ENCODE measurements at regions of chr19 and their contacts with region 1.

Region 1: GRCh38 chr19:5128251-5128935 is 159.5 kb downstream of the KDM4B start:
- DNase-seq: no peak
- ATAC-seq: no peak
- H3K4me3 Mint-ChIP-seq: peak overlapping the region; percentile 77
- H3K27ac Mint-ChIP-seq: peak overlapping the region; percentile 91
- H3K4me1 Mint-ChIP-seq: peaks cover 87% of the 10 kb centered on the region
- H3K27me3 Mint-ChIP-seq: no peaks in the 10 kb centered on the region
- CTCF ChIP-seq: no peak

Region 2: GRCh38 chr19:4831304-4831978 is 297.0 kb before region 1 on chr19 and contains the start of gene TICAM1:
- CTCF ChIA-PET with region 1: no interaction called
- POLR2A ChIA-PET with region 1: interaction called, 8 read pairs
- intact Hi-C with region 1: loop called (anchors 1 kb)
- DNase-seq: peak; percentile 78
- ATAC-seq: peak; percentile 76
- H3K4me3 Mint-ChIP-seq: peak within 1 kb of the TSS; percentile 90
- H3K27ac Mint-ChIP-seq: peak within 1 kb of the TSS; percentile 94
- H3K4me1 Mint-ChIP-seq: peaks cover 40% of the 10 kb centered on the region
- H3K27me3 Mint-ChIP-seq: no peaks in the 10 kb centered on the region
- CTCF ChIP-seq: no peak
- total RNA-seq, gene TICAM1: 34.4 and 39.4 TPM in 2 replicates

Region 3: DNA sequence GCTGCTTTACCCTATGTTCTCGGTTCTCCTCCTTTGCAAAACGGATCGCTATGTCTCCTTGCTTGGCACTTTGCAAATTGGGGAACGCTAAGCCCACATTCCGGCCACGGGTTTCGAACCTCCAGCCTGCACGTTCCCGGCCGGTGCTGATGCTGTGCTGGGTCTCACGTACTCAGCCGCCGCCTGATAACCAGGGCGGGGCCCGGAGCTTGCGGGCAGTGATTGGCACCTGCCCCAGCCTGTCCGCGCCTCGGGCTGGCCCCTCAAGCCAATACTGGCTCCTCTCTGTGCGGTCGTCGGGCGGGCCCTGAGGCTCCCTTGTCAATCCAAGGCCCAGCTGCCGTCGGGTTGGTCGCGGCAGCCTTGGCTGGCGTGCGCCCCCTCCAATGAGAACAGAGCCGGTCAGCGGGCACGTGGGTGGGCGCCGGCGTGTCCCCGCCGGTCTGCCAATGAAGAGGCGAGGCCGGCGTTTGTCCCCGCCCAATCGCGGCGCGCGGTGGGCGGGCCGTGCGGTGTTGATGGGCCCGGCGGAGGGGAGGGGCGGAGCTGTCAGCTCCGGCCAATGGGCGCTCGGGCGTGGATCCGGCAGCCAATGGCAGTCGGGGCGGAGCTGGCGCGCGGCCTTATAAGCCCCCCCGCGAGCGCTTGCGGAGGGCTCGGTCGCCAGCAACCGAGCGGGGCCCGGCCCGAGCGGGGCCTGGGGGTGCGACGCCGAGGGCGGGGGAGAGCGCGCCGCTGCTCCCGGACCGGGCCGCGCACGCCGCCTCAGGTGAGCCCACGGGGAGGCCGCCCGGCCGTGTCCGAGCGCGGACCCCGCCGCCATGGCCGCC is 159.7 kb before region 1 on chr19 and contains the start of gene KDM4B:
- CTCF ChIA-PET with region 1: no interaction called
- POLR2A ChIA-PET with region 1: interaction called, 12 read pairs
- intact Hi-C with region 1: loop called (anchors 2 kb)
- DNase-seq: peak; percentile 99
- ATAC-seq: peak; percentile 89
- H3K4me3 Mint-ChIP-seq: peak within 1 kb of the TSS; percentile 88
- H3K27ac Mint-ChIP-seq: peak within 1 kb of the TSS; percentile 88
- H3K4me1 Mint-ChIP-seq: peaks cover 31% of the 10 kb centered on the region
- H3K27me3 Mint-ChIP-seq: no peaks in the 10 kb centered on the region
- CTCF ChIP-seq: no peak
- total RNA-seq, gene KDM4B: 76.4 and 88.9 TPM in 2 replicates

Region 4: GRCh38 chr19:5074407-5074806 is 54.0 kb before region 1 on chr19:
- CTCF ChIA-PET with region 1: no interaction called
- POLR2A ChIA-PET with region 1: interaction called, 13 read pairs
- intact Hi-C with region 1: loop called (anchors 1 kb)
- DNase-seq: no peak
- ATAC-seq: peak; percentile 68
- H3K4me3 Mint-ChIP-seq: no peak overlapping the region
- H3K27ac Mint-ChIP-seq: no peak overlapping the region
- H3K4me1 Mint-ChIP-seq: peaks cover 37% of the 10 kb centered on the region
- H3K27me3 Mint-ChIP-seq: no peaks in the 10 kb centered on the region
- CTCF ChIP-seq: no peak

Region 5: DNA sequence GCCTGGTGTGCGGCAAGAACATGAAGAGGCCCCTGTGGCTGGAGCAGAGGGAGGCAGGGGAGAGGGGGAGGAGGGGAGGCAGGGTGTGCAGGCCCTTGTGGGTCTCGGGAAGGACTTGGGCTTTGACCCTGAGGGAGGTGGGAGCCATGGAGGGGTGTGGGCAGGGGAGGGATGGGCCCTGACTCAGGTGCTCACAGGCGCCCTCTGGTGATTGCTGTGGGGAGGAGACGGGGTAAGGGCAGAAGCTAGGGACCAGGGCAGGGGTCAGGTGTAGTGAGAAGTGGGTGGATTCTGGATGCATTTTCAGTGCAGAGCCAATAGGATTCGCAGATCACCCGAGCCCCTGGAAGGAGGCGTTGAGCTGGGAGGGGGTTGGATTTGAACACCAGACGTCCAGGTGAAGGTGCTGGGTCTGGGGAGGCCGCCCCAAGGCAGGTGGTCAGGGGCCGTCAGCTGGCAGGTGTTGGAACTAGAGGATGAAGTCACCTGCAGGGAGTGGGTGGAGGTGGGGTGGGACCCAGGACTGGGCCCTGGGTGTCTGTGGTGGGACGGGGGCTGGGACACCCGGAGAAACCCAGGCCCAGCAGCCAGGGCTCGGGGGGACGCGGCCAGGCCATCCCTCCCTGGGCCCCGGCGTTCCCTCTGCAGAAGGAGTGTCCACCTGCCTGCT is 25.9 kb after region 1 on chr19:
- CTCF ChIA-PET with region 1: interaction called, 11 read pairs
- POLR2A ChIA-PET with region 1: interaction called, 14 read pairs
- intact Hi-C with region 1: no loop called
- DNase-seq: peak; percentile 58
- ATAC-seq: peak; percentile 74
- H3K4me3 Mint-ChIP-seq: no peak overlapping the region
- H3K27ac Mint-ChIP-seq: no peak overlapping the region
- H3K4me1 Mint-ChIP-seq: peaks cover 12% of the 10 kb centered on the region
- H3K27me3 Mint-ChIP-seq: no peaks in the 10 kb centered on the region
- CTCF ChIP-seq: no peak

Region 6: GRCh38 chr19:5166262-5166661 is 37.9 kb after region 1 on chr19:
- CTCF ChIA-PET with region 1: no interaction called
- POLR2A ChIA-PET with region 1: no interaction called
- intact Hi-C with region 1: no loop called
- DNase-seq: no peak
- ATAC-seq: no peak
- H3K4me3 Mint-ChIP-seq: no peak overlapping the region
- H3K27ac Mint-ChIP-seq: no peak overlapping the region
- H3K4me1 Mint-ChIP-seq: no peaks in the 10 kb centered on the region
- H3K27me3 Mint-ChIP-seq: no peaks in the 10 kb centered on the region
- CTCF ChIP-seq: no peak

Region 7: DNA sequence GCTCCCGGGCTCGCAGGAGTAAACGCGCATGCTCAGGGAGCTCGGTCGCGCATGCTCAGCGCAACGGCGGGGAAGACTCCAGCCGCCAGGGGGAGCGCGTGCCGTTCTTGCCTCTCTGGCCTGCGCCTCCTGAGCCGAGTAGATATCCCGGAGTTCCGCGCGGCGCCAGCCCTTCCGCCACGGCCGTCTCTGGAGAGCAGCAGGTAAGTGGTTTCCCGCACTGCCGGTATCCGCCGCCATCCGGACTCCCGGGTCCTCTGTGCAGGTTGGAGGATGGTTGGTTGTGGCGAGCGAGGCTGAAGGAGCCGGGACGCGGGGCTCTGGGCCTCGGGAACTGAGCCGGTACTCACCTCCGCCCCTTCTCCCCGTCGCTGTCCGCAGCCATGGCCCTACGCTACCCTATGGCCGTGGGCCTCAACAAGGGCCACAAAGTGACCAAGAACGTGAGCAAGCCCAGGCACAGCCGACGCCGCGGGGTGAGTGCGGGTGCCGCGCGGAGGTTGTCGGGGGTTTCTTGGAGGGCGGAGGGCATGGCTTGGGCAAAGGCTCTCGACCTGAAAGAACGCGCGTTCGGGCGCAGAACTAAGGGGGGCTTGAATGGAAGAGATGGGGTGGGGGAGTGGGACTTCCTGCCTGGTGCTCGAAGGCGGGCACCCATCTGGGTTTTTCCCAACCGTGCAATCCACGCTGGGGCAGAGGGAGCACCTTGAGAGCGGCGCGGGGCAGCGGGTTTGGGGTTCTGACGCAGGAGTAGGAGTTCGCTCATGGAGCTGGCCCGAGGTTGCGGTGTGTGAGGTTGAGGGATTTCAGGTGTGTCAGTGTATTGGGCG is 561.9 kb after region 1 on chr19 and contains the start of gene RPL36:
- CTCF ChIA-PET with region 1: no interaction called
- POLR2A ChIA-PET with region 1: no interaction called
- intact Hi-C with region 1: loop called (anchors 2 kb)
- DNase-seq: peak; percentile 99
- ATAC-seq: peak; percentile 48
- H3K4me3 Mint-ChIP-seq: peak within 1 kb of the TSS; percentile 93
- H3K27ac Mint-ChIP-seq: peak within 1 kb of the TSS; percentile 90
- H3K4me1 Mint-ChIP-seq: peaks cover 33% of the 10 kb centered on the region
- H3K27me3 Mint-ChIP-seq: no peaks in the 10 kb centered on the region
- CTCF ChIP-seq: peak; percentile 88
- total RNA-seq, gene RPL36: 1,170 and 1,330 TPM in 2 replicates